ENCODE measurements at regions of chr2 and their contacts with region 1.

Region 1: DNA sequence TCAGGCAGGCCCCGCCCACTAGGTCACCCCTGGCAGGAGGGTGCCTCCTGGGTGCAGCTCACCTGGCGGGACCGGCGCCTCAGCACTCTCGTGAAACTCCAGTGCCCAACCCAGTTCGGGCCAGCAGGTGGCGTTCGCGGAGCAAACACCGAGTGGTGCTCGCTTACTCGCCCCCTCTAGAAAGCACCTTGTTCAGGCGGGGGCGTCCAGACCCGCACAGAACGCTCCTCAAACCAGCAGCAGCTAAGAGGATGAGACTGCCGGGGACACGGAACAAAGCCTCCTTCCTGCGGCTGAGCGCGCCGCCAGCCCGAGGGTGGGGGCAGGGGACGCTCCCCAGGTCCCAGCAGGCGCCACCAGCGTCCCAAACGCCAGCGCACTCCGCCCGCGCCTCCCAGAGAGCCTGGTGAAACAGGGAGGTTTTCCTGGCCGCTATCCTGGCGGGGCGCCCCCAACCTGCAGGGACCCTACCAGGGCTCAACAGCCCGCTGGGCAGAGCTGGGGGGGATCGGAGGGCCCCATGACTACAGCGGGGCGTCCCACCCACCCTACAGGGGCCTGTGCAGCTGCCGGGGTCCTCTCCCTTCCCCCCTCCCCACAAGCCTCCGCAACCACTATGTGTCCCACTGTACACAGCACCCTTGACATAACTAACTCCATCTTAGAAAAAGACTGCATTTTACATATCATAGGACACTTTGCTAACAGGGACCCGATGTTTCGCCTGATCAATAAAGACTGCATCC is 44.7 kb downstream of the MRPS5 start:
- DNase-seq: peak; percentile 93
- H3K4me3 Mint-ChIP-seq: peak overlapping the region; percentile 78
- H3K27ac Mint-ChIP-seq: peak overlapping the region; percentile 98
- H3K4me1 Mint-ChIP-seq: peaks cover 79% of the 10 kb centered on the region
- H3K27me3 Mint-ChIP-seq: no peaks in the 10 kb centered on the region

Region 2: GRCh38 chr2:94273242-94273641 is 803.7 kb before region 1 on chr2:
- CTCF ChIA-PET with region 1: no interaction called
- POLR2A ChIA-PET with region 1: no interaction called
- DNase-seq: no peak
- H3K4me3 Mint-ChIP-seq: no peak overlapping the region
- H3K27ac Mint-ChIP-seq: no peak overlapping the region
- H3K4me1 Mint-ChIP-seq: no peaks in the 10 kb centered on the region
- H3K27me3 Mint-ChIP-seq: no peaks in the 10 kb centered on the region

Region 3: DNA sequence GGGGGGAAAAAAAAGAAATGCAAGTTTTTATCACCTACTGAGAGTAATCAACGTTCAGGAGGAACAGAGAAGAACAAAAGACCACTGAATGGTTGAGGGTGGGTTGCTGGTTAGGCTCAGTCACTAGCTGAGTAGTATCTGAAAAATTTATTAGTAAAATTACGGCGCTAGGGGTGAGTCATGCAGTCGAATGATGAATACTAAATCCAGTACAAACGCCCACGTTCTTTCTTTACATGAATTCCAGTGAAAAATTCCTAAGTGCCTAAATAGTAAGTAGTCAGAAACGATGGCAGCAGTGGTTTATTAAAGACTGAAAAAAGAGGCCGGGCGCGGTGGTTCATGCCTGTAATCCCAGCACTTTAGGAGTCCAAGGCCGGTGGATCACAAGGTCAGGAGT is 153.8 kb before region 1 on chr2:
- CTCF ChIA-PET with region 1: no interaction called
- POLR2A ChIA-PET with region 1: no interaction called
- DNase-seq: no peak
- H3K4me3 Mint-ChIP-seq: no peak overlapping the region
- H3K27ac Mint-ChIP-seq: no peak overlapping the region
- H3K4me1 Mint-ChIP-seq: no peaks in the 10 kb centered on the region
- H3K27me3 Mint-ChIP-seq: no peaks in the 10 kb centered on the region

Region 4: GRCh38 chr2:94986392-94986963 is 90.5 kb before region 1 on chr2:
- CTCF ChIA-PET with region 1: interaction called, 20 read pairs
- POLR2A ChIA-PET with region 1: no interaction called
- DNase-seq: peak; percentile 54
- H3K4me3 Mint-ChIP-seq: no peak overlapping the region
- H3K27ac Mint-ChIP-seq: no peak overlapping the region
- H3K4me1 Mint-ChIP-seq: peaks cover 5% of the 10 kb centered on the region
- H3K27me3 Mint-ChIP-seq: peaks cover 19% of the 10 kb centered on the region

Region 5: DNA sequence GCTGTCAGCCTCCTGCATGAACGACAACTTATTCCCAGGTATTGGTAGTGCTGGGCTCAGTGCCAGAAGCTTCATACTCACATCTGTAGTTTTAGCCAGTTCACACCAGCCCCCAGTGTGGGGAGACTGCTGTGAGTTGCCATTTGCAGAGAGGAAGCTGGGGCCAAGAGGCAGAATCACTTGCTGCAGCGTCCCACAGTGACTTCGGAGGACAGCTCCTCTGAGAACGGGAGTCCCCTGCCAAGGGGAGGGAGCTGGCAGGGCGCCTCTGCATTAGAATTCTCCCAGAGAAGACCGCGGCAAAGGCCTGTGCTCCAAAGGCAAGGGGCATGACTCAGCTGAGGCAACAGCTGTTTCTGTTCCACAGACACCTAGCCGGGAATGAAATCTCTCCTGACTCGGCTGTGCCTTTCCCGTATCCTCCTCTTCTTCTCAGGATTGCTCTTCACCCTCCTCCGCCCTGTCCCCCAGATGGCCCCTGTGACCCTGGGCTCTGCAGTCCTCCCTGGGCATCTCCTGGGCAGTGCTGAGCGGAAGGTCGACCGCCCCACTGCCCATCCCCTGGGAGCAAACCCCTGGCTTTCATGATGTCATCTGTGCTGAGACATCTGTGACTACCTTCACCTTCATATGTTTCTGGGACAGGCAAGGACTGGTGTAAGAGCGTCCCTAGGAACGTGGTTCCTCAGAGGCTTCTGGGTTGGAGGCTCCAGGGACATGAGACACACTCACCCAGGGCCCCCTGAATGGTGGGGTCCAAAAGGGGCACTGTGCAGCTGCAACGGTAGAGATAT is 33.5 kb before region 1 on chr2:
- CTCF ChIA-PET with region 1: interaction called, 11 read pairs
- POLR2A ChIA-PET with region 1: interaction called, 3 read pairs
- DNase-seq: no peak
- H3K4me3 Mint-ChIP-seq: no peak overlapping the region
- H3K27ac Mint-ChIP-seq: peak overlapping the region; percentile 41
- H3K4me1 Mint-ChIP-seq: peaks cover 60% of the 10 kb centered on the region
- H3K27me3 Mint-ChIP-seq: no peaks in the 10 kb centered on the region

Region 6: GRCh38 chr2:95062242-95063085 is 14.5 kb before region 1 on chr2:
- CTCF ChIA-PET with region 1: interaction called, 58 read pairs
- POLR2A ChIA-PET with region 1: interaction called, 286 read pairs
- DNase-seq: no peak
- H3K4me3 Mint-ChIP-seq: no peak overlapping the region
- H3K27ac Mint-ChIP-seq: peak overlapping the region; percentile 78
- H3K4me1 Mint-ChIP-seq: peaks cover 35% of the 10 kb centered on the region
- H3K27me3 Mint-ChIP-seq: no peaks in the 10 kb centered on the region

Region 7: DNA sequence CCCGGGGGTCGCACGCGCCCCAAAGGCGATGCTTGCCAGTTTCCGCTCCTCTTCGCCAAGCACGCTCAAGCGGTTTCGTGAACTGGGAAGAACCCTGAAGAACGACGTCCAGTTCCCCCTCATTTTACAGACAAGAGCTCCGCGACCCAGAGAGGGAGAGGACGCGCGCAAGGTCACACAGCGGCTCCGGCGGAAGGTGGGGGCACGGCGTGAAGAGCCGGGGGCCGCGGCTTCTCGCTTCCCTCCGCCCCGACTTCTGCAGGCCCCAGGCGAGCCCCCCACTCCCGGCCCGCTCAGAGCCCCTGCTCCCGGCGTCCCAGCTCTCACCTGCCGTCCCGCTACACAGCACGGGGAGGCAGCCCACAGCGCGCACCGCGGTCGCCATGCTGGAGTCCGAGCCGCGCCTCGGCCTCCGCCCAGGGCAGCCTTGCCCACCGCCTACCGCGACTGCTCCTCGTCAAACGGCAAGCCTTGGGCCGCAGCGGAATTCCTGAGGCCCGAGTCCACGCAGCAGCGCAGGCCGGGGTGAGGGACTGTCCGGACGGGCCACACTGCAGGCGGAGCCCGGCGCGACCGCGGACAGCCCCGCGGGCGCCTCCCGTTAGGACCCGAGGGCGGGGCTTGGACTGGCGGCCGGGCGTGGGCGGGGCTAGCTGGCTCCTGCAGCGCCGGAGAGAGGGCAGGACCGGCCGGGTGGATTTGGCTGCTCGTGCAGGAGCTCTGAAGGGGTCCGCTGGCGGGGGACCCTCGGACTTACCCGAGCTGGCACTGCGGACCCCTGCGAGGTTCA is 44.6 kb after region 1 on chr2 and contains the start of gene MRPS5:
- CTCF ChIA-PET with region 1: interaction called, 202 read pairs
- POLR2A ChIA-PET with region 1: interaction called, 32 read pairs
- DNase-seq: peak; percentile 85
- H3K4me3 Mint-ChIP-seq: peak within 1 kb of the TSS; percentile 82
- H3K27ac Mint-ChIP-seq: peak within 1 kb of the TSS; percentile 89
- H3K4me1 Mint-ChIP-seq: peaks cover 42% of the 10 kb centered on the region
- H3K27me3 Mint-ChIP-seq: peaks cover 2% of the 10 kb centered on the region
- total RNA-seq, gene MRPS5: 66.3 to 68.2 TPM

Region 8: DNA sequence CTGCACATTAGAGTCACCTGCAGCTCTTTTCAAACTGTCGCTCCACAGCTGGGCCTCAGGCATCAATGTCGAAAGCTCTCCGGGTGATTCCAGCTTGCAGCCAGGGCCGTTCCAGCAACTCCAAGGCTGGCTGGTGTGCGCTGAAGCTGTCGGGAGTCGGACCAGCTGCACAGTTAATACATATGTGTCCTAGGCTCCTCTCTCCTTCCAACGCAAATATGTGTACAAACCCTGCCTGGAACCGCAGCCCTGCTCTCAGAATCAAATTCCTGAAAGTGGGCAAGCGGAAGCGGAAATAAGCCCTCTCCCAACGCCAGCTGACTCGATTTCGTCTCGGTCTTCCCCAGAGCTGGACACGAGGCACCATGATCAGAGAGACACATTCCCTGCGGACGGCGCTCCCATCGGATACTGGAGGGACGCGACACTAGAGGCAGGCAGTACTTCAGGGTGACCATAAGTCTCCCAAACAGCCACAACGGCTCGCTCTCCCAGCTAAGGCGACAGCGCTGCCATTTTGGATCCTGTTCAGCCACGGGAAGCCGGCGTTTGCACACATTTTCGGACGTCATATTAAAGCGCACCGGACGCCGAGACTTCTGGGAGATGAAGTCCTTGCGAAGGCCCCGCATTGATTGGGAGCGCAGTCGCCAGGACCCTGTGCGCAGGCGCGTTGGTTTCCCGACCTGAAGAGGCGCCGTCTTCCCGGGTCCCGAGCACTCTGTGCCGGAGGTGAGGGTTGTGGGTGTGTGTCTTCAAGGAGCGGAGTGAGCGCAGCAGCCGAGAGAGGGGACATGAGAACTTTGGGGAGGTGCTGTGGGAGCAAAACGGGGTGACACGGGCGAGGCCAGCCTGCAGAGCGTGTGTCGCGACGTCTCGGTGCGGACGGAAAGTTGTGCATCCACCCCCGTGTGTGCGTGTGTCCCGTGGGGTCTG is 88.4 kb after region 1 on chr2 and contains the start of gene ZNF2:
- CTCF ChIA-PET with region 1: interaction called, 15 read pairs
- POLR2A ChIA-PET with region 1: interaction called, 4 read pairs
- DNase-seq: peak; percentile 97
- H3K4me3 Mint-ChIP-seq: peak within 1 kb of the TSS; percentile 100
- H3K27ac Mint-ChIP-seq: peak within 1 kb of the TSS; percentile 92
- H3K4me1 Mint-ChIP-seq: peaks cover 32% of the 10 kb centered on the region
- H3K27me3 Mint-ChIP-seq: no peaks in the 10 kb centered on the region
- total RNA-seq, gene ZNF2: 3.5 to 3.9 TPM

Measured in activated CD4-positive, alpha-beta memory T cell treated with anti-CD3 and anti-CD28 coated beads, Interleukin-2, amount 10 ng/mL, durations not matched to agents 7 days and 5 days (primary cell).